Right cardiac atrium (tissue), 5 donors: ENCODE measurements at regions of chr18 and their contacts with region 1.

Region 1: DNA sequence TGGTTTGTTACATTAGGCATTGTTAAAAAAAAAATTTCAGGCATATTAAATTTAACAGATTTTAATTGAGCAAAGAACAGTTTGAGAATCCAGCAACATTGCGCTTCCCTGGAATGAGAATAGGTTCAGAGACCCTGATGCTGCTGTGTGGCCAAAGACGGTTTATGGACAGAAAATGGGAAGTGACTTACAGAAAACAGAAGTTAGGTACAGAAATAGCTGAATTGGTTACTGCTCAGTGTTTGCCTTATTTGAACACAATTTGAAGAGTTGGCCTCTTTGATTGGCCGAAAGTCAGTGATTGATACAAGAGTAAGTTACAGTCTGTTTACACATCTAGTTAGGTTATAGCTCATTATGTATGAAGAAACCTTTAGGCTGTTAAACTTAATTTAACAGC is 6.0 kb upstream of the NEDD4L start:
- DNase-seq: no peak
- ATAC-seq: no peak
- H3K4me3 ChIP-seq: no peak overlapping the region
- H3K27ac ChIP-seq: no peak overlapping the region
- H3K4me1 ChIP-seq: no peaks in the 10 kb centered on the region
- H3K27me3 ChIP-seq: no peaks in the 10 kb centered on the region

Region 2: DNA sequence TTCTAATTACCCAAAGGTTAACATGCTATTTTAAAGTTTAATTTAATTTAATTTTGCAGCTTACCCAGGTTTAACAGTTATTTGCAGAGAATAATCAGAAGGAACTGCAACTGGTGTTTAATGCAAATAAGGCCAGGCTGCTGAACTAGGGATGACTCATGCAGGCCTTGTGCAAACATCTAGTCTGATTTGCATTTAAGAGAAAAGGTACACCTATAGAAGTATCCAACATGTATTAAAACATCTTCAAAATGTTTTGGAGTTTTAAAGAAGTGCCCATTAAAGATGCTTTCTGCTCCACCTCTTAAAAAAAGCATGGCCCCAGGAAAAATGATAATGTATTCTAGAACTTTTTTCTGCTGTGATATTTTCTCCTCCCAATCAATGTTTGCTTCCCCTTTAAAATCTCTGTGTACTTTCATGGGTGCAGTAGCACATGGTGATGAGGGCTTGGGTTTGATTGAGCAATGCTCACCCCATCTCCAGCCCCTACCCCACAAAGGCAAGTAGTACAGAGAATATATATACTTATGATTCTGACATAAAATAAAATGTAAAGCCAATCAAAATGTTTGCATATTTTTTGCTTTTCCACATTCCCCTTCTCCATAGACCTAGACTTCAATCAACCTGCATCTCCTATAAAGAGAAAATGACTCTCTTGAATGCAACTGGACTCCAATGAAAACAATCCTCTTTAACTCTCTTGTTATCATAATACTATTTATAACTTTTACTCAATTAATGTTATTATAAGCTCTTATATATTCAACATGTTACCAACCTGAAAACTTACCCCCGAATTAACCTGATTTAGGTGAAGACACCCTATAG is 289.1 kb before region 1 on chr18:
- intact Hi-C with region 1: no loop called
- DNase-seq: no peak
- ATAC-seq: no peak
- H3K4me3 ChIP-seq: no peak overlapping the region
- H3K27ac ChIP-seq: no peak overlapping the region
- H3K4me1 ChIP-seq: no peaks in the 10 kb centered on the region
- H3K27me3 ChIP-seq: no peaks in the 10 kb centered on the region

Region 3: DNA sequence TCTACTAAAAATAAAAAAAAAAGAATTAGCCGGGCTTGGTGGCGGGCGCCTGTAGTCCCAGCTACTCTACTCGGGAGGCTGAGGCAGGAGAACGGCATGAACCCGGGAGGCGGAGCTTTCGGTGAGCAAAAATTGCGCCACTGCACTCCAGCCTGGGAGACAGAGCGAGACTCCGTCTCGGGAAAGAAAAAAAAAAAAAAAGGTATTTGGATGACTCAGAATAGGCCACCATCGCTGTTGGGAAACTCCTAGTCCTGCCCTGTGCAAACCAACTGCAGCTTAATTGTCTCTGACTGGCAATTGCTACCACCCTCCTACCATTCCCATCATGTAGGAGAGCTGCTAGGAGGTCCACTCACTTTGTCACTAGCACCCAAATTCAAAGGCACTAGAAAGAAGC is 278.4 kb before region 1 on chr18:
- intact Hi-C with region 1: no loop called
- DNase-seq: no peak
- ATAC-seq: no peak
- H3K4me3 ChIP-seq: no peak overlapping the region
- H3K27ac ChIP-seq: no peak overlapping the region
- H3K4me1 ChIP-seq: no peaks in the 10 kb centered on the region
- H3K27me3 ChIP-seq: no peaks in the 10 kb centered on the region

Region 4: GRCh38 chr18:57881818-57882413 is 156.1 kb before region 1 on chr18:
- intact Hi-C with region 1: loop called in 1 of 4 experiments (anchors 10 kb)
- DNase-seq: peak; percentile 42 to 71 (median 65)
- ATAC-seq: peak; percentile 88 to 94
- H3K4me3 ChIP-seq: no peak overlapping the region
- H3K27ac ChIP-seq: no peak overlapping the region
- H3K4me1 ChIP-seq: no peaks in the 10 kb centered on the region
- H3K27me3 ChIP-seq: no peaks in the 10 kb centered on the region